Dorsolateral prefrontal cortex (tissue), 120 donors: ENCODE measurements at regions of chr7 and their contacts with region 1.

Region 1: GRCh38 chr7:106461993-106462859 is 177.4 kb upstream of the NAMPT start:
- DNase-seq: no peak
- H3K4me3 ChIP-seq: no peak overlapping the region
- H3K27ac ChIP-seq: no peak overlapping the region
- H3K27me3 ChIP-seq: no peaks in the 10 kb centered on the region
- CTCF ChIP-seq: peak; percentile 54 to 93 (median 78)

Region 2: GRCh38 chr7:106176414-106177299 is 285.6 kb before region 1 on chr7:
- intact Hi-C with region 1: loop called (anchors 1 kb)
- DNase-seq: peak; percentile 75 to 89 (median 84)
- H3K4me3 ChIP-seq: no peak overlapping the region
- H3K27ac ChIP-seq: peak overlapping the region in 31 of 59 donors; percentile 16 to 76 (median 48)
- H3K27me3 ChIP-seq: no peaks in the 10 kb centered on the region
- CTCF ChIP-seq: peak; percentile 77 to 99 (median 94)